Posterior cingulate gyrus (tissue), 11 donors: ENCODE measurements at regions of chr14 and their contacts with region 1.

Region 1: GRCh38 chr14:77314043-77314442 is 6.6 kb downstream of the POMT2 start:
- DNase-seq: peak in 4 of 10 donors; percentile 43 to 86 (median 50)

Region 2: GRCh38 chr14:77301103-77301502 is 12.9 kb before region 1 on chr14:
- intact Hi-C with region 1: loop called (anchors 1 kb)
- DNase-seq: peak; percentile 62 to 97 (median 91)